Lower leg skin (tissue), 4 donors: ENCODE measurements at regions of chr6 and their contacts with region 1.

Region 1: GRCh38 chr6:70369332-70369950 is 43.9 kb upstream of the FAM135A start:
- DNase-seq: peak; percentile 48 to 90
- H3K4me3 ChIP-seq: no peak overlapping the region
- CTCF ChIP-seq: peak in 1 of 3 donors; percentile 53
- POLR2A ChIP-seq: no peak

Region 2: GRCh38 chr6:70304616-70305015 is 64.8 kb before region 1 on chr6:
- intact Hi-C with region 1: loop called (anchors 10 kb)
- DNase-seq: no peak
- H3K4me3 ChIP-seq: no peak overlapping the region
- CTCF ChIP-seq: no peak
- POLR2A ChIP-seq: no peak